ENCODE measurements at regions of chr17 and their contacts with region 1.

Region 1: DNA sequence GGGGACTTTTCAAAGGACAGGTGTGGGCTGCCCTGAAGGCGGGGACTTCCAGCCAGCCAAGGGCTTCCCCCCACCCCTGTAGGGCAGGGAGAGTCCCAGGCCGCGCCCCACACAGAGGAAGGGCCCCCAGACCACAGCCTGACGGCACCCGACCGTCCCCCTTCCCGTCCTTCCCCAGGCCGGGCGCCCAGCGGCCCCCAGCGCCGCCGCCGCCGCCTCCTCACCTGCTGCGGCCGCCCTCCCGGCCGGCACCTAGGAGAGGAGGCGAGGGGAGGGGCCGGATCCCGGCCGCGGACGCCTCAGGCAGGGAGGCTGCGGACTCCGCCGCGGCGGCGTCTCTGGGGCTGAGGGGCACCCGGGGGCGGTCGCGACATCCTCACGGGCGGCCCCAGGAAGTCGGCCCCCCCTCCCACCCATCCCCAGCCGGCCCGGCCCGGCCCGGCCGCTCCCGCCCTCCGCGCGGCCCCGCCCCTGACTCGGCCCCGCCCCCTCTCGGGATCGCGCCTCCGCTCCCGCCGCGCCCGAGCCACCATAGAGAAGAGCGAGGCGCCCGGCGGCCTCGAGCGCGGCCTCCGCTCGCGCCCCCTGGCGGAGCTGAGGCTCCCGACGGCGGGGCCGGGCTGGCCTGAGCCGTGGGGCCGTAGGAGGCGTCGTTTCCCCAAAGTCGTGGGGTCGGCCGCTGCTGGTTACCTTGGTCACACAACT is 25.5 kb upstream of the RFFL start:
- DNase-seq: peak; percentile 96

Region 2: GRCh38 chr17:34998205-34998604 is 90.8 kb before region 1 on chr17:
- intact Hi-C with region 1: loop called (anchors 2 kb)
- DNase-seq: peak; percentile 93

Region 3: GRCh38 chr17:35022536-35023063 is 66.4 kb before region 1 on chr17:
- intact Hi-C with region 1: loop called (anchors 5 kb)
- DNase-seq: peak; percentile 87

Region 4: GRCh38 chr17:35965272-35965671 is 876.2 kb after region 1 on chr17:
- intact Hi-C with region 1: no loop called
- DNase-seq: no peak

Measured in cardiac septum (tissue), 1 donor.